Vagina (tissue), 2 donors: ENCODE measurements at regions of chr5 and their contacts with region 1.

Region 1: DNA sequence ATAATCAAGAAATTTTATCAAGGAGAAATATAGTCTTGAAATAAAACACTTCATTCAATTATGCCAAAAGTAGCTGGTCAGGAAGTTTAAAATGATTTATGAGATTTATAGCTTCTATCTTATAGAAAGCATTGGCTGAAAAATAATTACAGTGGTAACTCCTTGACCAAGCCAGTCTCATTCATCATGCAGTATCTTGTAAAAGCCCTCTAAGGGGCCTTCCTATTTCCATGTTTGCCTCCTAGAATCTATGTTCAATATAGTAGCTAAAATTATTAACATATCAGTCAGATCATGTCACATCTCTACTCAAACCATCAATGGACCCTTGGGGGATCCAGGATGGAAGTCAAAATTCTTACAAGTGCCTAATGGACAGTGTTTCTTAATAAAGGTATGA is 393.4 kb upstream of the ST8SIA4 start:
- DNase-seq: no peak
- H3K4me3 ChIP-seq: no peak overlapping the region
- H3K27ac ChIP-seq: no peak overlapping the region
- H3K4me1 ChIP-seq: no peaks in the 10 kb centered on the region
- H3K27me3 ChIP-seq: no peaks in the 10 kb centered on the region
- CTCF ChIP-seq: no peak
- POLR2A ChIP-seq: no peak

Region 2: DNA sequence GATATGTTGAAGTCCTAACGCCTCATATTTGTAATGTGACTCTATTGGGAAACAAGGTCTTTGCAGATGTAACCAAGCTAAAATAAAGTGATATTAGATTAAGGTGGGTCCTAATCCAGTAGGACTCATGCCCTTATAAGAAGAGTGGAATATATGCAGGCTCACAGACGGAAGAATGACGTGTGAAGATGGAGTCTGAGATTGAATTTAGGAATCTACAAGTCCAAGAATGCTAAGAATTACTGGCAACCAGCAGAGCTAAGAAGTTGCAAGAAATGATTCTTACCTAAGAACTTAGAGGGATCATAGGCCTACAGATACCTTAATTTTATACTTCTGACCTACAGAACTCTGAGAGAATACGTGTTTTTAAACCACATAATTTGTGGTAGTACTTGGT is 43.4 kb before region 1 on chr5:
- intact Hi-C with region 1: no loop called
- DNase-seq: no peak
- H3K4me3 ChIP-seq: no peak overlapping the region
- H3K27ac ChIP-seq: no peak overlapping the region
- H3K4me1 ChIP-seq: no peaks in the 10 kb centered on the region
- H3K27me3 ChIP-seq: no peaks in the 10 kb centered on the region
- CTCF ChIP-seq: no peak
- POLR2A ChIP-seq: no peak

Region 3: GRCh38 chr5:101271416-101271815 is 25.1 kb before region 1 on chr5:
- intact Hi-C with region 1: loop called (anchors 1 kb)
- DNase-seq: no peak
- H3K4me3 ChIP-seq: no peak overlapping the region
- H3K27ac ChIP-seq: no peak overlapping the region
- H3K4me1 ChIP-seq: no peaks in the 10 kb centered on the region
- H3K27me3 ChIP-seq: no peaks in the 10 kb centered on the region
- CTCF ChIP-seq: no peak
- POLR2A ChIP-seq: no peak

Region 4: DNA sequence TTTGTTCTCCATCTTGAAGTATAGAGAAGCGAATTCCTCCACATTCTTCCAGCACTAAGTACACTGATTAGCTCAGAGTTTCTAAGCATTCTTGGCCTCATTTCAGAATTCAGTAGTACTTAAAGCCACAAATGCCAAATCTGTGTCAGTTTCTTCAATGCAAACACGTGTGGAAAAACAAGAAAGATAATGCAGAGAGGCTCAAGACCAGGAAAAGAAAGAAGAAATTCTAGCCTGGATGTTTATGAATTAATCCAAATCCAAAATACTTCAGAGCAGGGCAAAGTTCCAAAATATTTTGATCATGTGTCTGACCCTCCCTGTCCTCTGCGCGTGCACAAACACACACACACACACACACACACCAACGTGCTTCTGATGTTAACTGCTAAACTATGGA is 542.0 kb after region 1 on chr5:
- intact Hi-C with region 1: no loop called
- DNase-seq: no peak
- H3K4me3 ChIP-seq: no peak overlapping the region
- H3K27ac ChIP-seq: no peak overlapping the region
- H3K4me1 ChIP-seq: no peaks in the 10 kb centered on the region
- H3K27me3 ChIP-seq: no peaks in the 10 kb centered on the region
- CTCF ChIP-seq: no peak
- POLR2A ChIP-seq: no peak